ENCODE measurements at regions of chr19 and their contacts with region 1.

Region 1: GRCh38 chr19:40662921-40663694 is 27.3 kb downstream of the NUMBL start:
- DNase-seq: peak; percentile 94
- H3K4me3 Mint-ChIP-seq: peak overlapping the region; percentile 74
- H3K27ac Mint-ChIP-seq: peak overlapping the region; percentile 76
- H3K4me1 Mint-ChIP-seq: peaks cover 27% of the 10 kb centered on the region
- H3K27me3 Mint-ChIP-seq: no peaks in the 10 kb centered on the region

Region 2: GRCh38 chr19:40716655-40717324 is 53.7 kb after region 1 on chr19 and contains the starts of genes COQ8B and ITPKC:
- CTCF ChIA-PET with region 1: interaction called, 9 read pairs
- POLR2A ChIA-PET with region 1: interaction called, 3 read pairs
- intact Hi-C with region 1: loop called (anchors 1 kb)
- DNase-seq: peak; percentile 100
- H3K4me3 Mint-ChIP-seq: peak within 1 kb of the TSS; percentile 93
- H3K27ac Mint-ChIP-seq: peak within 1 kb of the TSS; percentile 97
- H3K4me1 Mint-ChIP-seq: peaks cover 54% of the 10 kb centered on the region
- H3K27me3 Mint-ChIP-seq: no peaks in the 10 kb centered on the region
- total RNA-seq, gene COQ8B: 31.7 to 36.3 TPM
- total RNA-seq, gene ITPKC: 6.4 TPM

Region 3: GRCh38 chr19:40777937-40778705 is 115.0 kb after region 1 on chr19 and contains the start of gene RAB4B:
- CTCF ChIA-PET with region 1: interaction called, 10 read pairs
- POLR2A ChIA-PET with region 1: no interaction called
- intact Hi-C with region 1: no loop called
- DNase-seq: peak; percentile 100
- H3K4me3 Mint-ChIP-seq: peak within 1 kb of the TSS; percentile 91
- H3K27ac Mint-ChIP-seq: peak within 1 kb of the TSS; percentile 92
- H3K4me1 Mint-ChIP-seq: peaks cover 37% of the 10 kb centered on the region
- H3K27me3 Mint-ChIP-seq: no peaks in the 10 kb centered on the region
- total RNA-seq, gene RAB4B: 38.0 to 41.7 TPM

Region 4: GRCh38 chr19:40813182-40813958 is 150.3 kb after region 1 on chr19:
- CTCF ChIA-PET with region 1: interaction called, 68 read pairs
- POLR2A ChIA-PET with region 1: interaction called, 6 read pairs
- intact Hi-C with region 1: no loop called
- DNase-seq: no peak
- H3K4me3 Mint-ChIP-seq: no peak overlapping the region
- H3K27ac Mint-ChIP-seq: no peak overlapping the region
- H3K4me1 Mint-ChIP-seq: peaks cover 27% of the 10 kb centered on the region
- H3K27me3 Mint-ChIP-seq: no peaks in the 10 kb centered on the region

Region 5: DNA sequence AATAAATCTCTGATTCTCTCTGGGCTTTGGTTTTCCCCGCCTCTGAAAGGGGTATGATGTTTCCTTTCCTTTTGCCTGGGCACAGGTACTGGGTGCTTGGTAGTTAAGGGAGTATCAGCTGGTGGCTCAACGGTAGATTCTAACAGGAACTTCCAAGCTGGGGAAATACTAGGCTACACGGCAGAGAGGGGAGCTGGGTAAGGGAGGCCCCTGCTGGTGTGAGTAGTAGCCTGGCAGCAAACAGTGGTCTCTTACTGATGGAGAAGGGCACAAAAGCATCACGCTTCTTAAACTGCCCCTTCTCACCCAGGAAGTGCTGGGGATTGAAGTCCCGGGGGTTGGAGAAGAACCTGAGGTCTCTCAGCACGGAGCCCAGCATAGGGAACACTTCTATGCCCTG is 245.9 kb after region 1 on chr19:
- CTCF ChIA-PET with region 1: interaction called, 17 read pairs
- POLR2A ChIA-PET with region 1: no interaction called
- intact Hi-C with region 1: loop called (anchors 2 kb)
- DNase-seq: peak; percentile 63
- H3K4me3 Mint-ChIP-seq: peak overlapping the region; percentile 65
- H3K27ac Mint-ChIP-seq: no peak overlapping the region
- H3K4me1 Mint-ChIP-seq: peaks cover 9% of the 10 kb centered on the region
- H3K27me3 Mint-ChIP-seq: peaks cover 4% of the 10 kb centered on the region

Measured in activated CD4-positive, alpha-beta memory T cell treated with anti-CD3 and anti-CD28 coated beads for 36 hours (primary cell).